Sigmoid colon (tissue), 7 donors: ENCODE measurements at regions of chr17 and their contacts with region 1.

Region 1: DNA sequence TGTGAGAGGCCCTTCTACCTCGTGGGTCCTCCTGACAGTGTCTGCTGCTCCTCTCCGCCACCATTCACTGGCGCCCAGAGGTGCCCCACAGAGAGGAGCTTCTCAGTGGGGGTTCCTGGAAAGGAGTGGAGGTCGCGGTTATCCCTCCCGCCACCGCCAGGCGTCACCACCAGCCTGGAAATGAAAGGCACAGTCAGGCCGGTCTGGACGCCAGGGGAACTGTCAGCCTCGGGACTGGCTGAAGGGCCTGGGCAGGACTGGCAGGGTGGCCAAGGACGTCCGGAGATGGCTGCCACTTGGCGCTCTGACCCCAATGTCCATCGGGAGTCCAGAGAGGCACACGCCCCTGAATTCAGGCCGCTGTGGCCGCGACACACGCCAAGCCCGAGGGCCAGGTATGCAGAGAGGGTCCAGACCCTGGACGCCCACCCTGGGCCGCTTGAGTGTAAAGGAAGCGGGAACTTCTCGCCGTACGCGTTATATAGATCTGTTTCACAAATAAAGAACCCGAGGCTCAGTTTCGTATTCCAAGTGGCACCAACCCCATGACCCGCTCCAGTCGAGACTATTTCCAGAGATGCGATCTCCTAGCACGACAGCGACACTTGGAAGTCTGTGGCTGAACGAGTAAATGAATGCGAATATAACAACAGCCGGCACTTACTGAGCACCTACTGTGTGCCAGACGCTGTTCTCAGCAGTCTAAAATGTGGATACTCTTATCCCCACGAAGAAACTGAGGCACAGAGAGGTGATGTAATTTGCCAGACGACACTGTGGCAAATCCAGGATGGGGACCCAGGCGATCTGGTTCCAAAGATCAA is 7.6 kb upstream of the NXPH3 start:
- DNase-seq: peak; percentile 96
- H3K4me3 ChIP-seq: peak overlapping the region; percentile 22 to 45 (median 38)
- H3K27ac ChIP-seq: peak overlapping the region; percentile 87 to 92 (median 90)
- H3K4me1 ChIP-seq: peaks cover 0 to 53% (median 52%) of the 10 kb centered on the region in 4 donors
- H3K27me3 ChIP-seq: no peaks in the 10 kb centered on the region
- CTCF ChIP-seq: peak; percentile 89 to 100 (median 99)
- EP300 ChIP-seq: no peak
- POLR2A ChIP-seq: no peak

Region 2: GRCh38 chr17:49515196-49515770 is 52.8 kb before region 1 on chr17:
- intact Hi-C with region 1: loop called (anchors 2 kb)
- DNase-seq: peak; percentile 98
- H3K4me3 ChIP-seq: no peak overlapping the region
- H3K27ac ChIP-seq: peak overlapping the region; percentile 78 to 86 (median 82)
- H3K4me1 ChIP-seq: peaks cover 0 to 30% (median 30%) of the 10 kb centered on the region in 4 donors
- H3K27me3 ChIP-seq: no peaks in the 10 kb centered on the region
- CTCF ChIP-seq: peak in 3 of 4 experiments; percentile 37 to 46 (median 45)
- EP300 ChIP-seq: peak in 1 of 4 donors; percentile 55
- POLR2A ChIP-seq: no peak

Region 3: DNA sequence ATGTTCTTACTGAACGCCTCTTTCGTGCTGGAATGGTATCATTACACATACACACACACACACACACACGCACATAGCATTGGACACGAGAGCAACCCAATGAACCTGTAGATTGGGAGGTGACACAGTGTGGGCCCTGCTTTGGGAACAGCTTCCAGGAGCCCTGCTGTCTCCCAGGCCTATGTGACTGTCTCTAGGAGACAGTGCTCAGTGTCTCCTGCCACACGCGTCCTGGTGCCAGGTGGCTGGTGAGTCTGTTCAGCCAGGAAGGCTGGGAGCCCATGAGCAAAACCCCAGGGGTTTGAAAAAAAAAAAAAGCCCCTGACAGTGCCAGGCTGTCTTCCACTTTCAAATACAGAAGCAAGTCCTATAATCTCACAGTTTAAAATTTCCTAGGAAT is 112.2 kb after region 1 on chr17:
- intact Hi-C with region 1: no loop called
- DNase-seq: peak; percentile 55
- H3K4me3 ChIP-seq: no peak overlapping the region
- H3K27ac ChIP-seq: peak overlapping the region in 3 of 4 donors; percentile 22 to 48 (median 33)
- H3K4me1 ChIP-seq: peaks cover 0 to 20% (median 14%) of the 10 kb centered on the region in 4 donors
- H3K27me3 ChIP-seq: no peaks in the 10 kb centered on the region
- CTCF ChIP-seq: no peak
- EP300 ChIP-seq: no peak
- POLR2A ChIP-seq: no peak

Region 4: DNA sequence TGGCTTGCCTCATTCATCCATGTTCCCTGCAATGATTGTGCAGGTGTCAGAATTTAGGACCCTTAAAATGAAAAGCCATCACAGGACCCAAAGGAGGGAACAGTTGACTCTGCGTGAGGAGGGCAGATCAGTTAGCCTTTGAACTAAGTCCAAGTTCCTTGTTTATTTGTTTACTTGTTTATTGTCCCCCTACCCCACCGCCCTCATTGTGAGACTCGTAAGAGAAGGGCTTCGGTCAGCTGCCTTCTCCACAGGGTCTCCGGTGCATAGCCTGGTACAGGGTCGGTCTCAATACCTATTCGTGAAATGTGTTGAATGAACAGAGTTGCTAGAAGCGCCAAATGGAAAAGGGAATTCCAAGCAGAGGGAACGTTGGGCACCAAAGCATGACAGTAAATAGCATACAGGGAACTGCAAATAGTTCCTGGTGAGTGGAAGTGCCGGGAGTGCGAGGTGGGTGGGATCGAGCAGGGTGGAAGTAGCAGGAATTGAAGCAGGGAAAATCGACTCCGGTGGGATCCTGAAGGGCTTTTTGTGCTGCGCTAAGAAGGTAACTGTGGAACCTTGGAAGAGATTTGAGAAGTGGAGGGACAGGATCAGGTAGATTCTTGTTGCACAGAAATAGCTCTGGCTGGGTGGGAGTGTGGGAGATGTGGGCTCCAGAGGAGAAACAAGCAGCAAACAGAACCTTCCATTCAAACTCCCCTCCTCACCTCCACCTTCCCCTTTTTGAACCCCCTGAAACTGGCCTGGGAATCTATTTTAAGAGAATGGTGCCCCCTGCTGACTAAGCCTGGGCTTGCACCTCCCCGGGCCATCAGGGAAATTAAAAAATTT is 127.0 kb after region 1 on chr17:
- intact Hi-C with region 1: loop called (anchors 1 kb)
- DNase-seq: peak; percentile 74
- H3K4me3 ChIP-seq: peak overlapping the region in 2 of 4 donors; percentile 8 to 15
- H3K27ac ChIP-seq: peak overlapping the region in 3 of 4 donors; percentile 94 to 97 (median 95)
- H3K4me1 ChIP-seq: peaks cover 0 to 46% (median 39%) of the 10 kb centered on the region in 4 donors
- H3K27me3 ChIP-seq: no peaks in the 10 kb centered on the region
- CTCF ChIP-seq: peak; percentile 90 to 98 (median 94)
- EP300 ChIP-seq: no peak
- POLR2A ChIP-seq: no peak

Region 5: GRCh38 chr17:49779739-49780231 is 211.7 kb after region 1 on chr17:
- intact Hi-C with region 1: loop called (anchors 2 kb)
- DNase-seq: no peak
- H3K4me3 ChIP-seq: no peak overlapping the region
- H3K27ac ChIP-seq: peak overlapping the region; percentile 25 to 87 (median 56)
- H3K4me1 ChIP-seq: peaks cover 0 to 73% (median 57%) of the 10 kb centered on the region in 4 donors
- H3K27me3 ChIP-seq: no peaks in the 10 kb centered on the region
- CTCF ChIP-seq: peak in 3 of 4 experiments; percentile 43 to 62 (median 54)
- EP300 ChIP-seq: no peak
- POLR2A ChIP-seq: no peak

Region 6: DNA sequence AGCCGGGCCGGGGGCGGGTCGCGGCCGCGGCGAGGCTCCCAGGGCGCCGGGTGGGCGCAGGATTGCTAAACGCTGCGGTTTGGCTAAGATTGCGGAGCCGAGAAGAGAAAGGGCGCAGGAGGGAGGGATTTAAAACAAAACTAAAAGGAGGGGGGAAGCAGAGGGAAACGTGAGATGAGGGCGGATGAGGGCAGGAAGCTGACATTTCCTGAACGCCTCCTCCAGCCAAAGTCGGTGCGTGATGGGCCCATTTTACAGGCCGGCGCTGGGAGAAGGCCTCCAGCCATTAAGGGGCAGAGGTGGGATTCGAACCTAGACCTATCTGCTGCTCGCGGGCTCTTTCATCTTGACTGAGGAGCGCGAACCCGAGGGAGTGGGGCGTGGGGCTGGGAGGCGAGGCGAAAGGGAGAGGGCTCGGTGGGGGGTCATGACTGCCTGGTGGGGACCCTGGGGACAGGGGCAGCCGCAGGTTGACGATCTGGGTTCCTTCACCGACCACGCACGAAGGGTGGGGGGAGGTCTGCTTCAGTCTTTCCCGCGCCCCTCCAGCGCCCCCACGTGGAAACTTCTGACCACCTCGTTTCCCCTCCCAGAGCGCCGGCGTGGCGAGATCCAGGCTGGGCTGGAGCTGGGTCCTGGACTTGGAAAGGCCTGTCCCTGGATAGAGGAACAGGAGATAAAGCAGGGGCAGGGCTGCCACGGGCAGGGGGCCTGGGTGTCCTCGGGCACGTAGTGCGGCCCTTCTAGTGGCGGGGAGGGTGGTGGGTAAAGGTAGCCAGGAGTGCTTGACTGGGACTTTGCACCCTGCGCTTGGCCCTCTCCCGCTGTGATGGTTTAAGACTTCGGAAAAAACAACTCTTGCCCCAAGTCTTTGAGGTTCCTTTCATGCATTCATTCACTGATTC is 283.6 kb after region 1 on chr17:
- intact Hi-C with region 1: loop called (anchors 5 kb)
- DNase-seq: peak; percentile 80
- H3K4me3 ChIP-seq: peak overlapping the region; percentile 27 to 63 (median 58)
- H3K27ac ChIP-seq: peak overlapping the region in 2 of 4 donors; percentile 42 to 58
- H3K4me1 ChIP-seq: peaks cover 0 to 22% (median 20%) of the 10 kb centered on the region in 4 donors
- H3K27me3 ChIP-seq: no peaks in the 10 kb centered on the region
- CTCF ChIP-seq: peak; percentile 36 to 64 (median 52)
- EP300 ChIP-seq: no peak
- POLR2A ChIP-seq: no peak

Region 7: DNA sequence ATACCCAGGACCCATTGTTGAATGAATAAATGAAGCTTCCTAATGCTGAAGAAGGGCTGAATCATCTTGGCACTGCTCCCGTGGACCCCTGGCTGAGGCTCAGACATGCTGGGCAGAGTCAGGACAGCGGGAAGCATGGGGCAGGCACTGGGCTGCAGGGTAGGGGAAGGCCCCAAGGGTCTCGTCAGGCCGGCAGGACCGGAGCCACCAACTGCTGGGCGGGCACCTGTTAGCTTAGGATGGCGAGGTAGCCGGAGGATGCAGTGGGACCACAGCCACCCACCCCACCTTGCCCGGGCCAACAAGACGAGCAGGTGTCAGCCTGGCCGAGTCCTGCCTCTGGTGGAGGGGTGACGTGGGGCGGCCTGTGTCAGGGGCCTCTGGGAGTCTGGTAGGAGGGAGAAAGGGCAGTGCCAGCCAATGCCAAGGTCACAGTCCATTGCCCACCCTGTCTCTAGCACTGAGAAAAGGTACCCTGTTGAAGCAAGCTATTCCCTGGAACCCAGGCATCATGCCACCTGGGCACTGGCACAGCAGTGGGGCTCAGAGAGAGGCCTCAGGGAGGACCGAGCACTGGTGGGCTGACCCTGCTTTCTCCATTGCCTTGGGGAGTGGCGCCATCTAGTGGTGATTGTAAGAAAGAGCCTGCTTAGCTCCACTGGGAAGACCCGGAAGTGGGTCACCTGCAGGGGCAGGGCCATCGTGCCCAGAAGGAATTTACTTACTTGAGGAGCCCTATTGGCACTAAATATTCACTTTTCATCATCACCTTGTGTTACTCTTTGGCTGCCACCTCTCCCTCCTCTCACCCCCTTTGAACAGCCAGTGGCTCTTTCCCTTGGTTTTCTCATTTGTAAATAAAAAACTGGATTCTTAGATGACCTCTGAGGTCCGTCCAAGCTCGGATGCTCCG is 430.0 kb after region 1 on chr17:
- intact Hi-C with region 1: loop called (anchors 2 kb)
- DNase-seq: peak; percentile 85
- H3K4me3 ChIP-seq: no peak overlapping the region
- H3K27ac ChIP-seq: no peak overlapping the region
- H3K4me1 ChIP-seq: peaks cover 0 to 36% (median 35%) of the 10 kb centered on the region in 4 donors
- H3K27me3 ChIP-seq: peaks cover 39 to 94% (median 74%) of the 10 kb centered on the region in 3 donors
- CTCF ChIP-seq: peak; percentile 80 to 93 (median 90)
- EP300 ChIP-seq: no peak
- POLR2A ChIP-seq: no peak